ENCODE measurements at regions of chr3 and their contacts with region 1.

Region 1: GRCh38 chr3:65732051-65732935 is 306.4 kb downstream of the MAGI1 start:
- DNase-seq: peak in 5 of 9 donors; percentile 5 to 31 (median 16)
- ATAC-seq: peak; percentile 68
- H3K4me3 ChIP-seq: no peak overlapping the region
- H3K4me3 Mint-ChIP-seq: no peak overlapping the region
- H3K27ac ChIP-seq: no peak overlapping the region
- H3K27ac Mint-ChIP-seq: no peak overlapping the region
- H3K4me1 ChIP-seq: no peaks in the 10 kb centered on the region
- H3K4me1 Mint-ChIP-seq: peaks cover 0 to 4% (median 1%) of the 10 kb centered on the region in 7 donors
- H3K27me3 ChIP-seq: no peaks in the 10 kb centered on the region
- H3K27me3 Mint-ChIP-seq: peaks cover 0 to 14% (median 8%) of the 10 kb centered on the region in 5 donors

Region 2: GRCh38 chr3:65342084-65342683 is 390.1 kb before region 1 on chr3:
- CTCF ChIA-PET with region 1: no interaction called
- POLR2A ChIA-PET with region 1: no interaction called
- intact Hi-C with region 1: loop called in 1 of 2 experiments (anchors 10 kb)
- DNase-seq: peak in 1 of 9 donors; percentile 28
- ATAC-seq: no peak
- H3K4me3 ChIP-seq: no peak overlapping the region
- H3K4me3 Mint-ChIP-seq: no peak overlapping the region
- H3K27ac ChIP-seq: no peak overlapping the region
- H3K27ac Mint-ChIP-seq: no peak overlapping the region
- H3K4me1 ChIP-seq: no peaks in the 10 kb centered on the region
- H3K4me1 Mint-ChIP-seq: no peaks in the 10 kb centered on the region
- H3K27me3 ChIP-seq: no peaks in the 10 kb centered on the region
- H3K27me3 Mint-ChIP-seq: peaks cover 0 to 10% (median 3%) of the 10 kb centered on the region in 5 donors

Region 3: GRCh38 chr3:65493371-65493882 is 238.9 kb before region 1 on chr3:
- CTCF ChIA-PET with region 1: no interaction called
- POLR2A ChIA-PET with region 1: no interaction called
- intact Hi-C with region 1: no loop called
- DNase-seq: no peak
- ATAC-seq: no peak
- H3K4me3 ChIP-seq: no peak overlapping the region
- H3K4me3 Mint-ChIP-seq: no peak overlapping the region
- H3K27ac ChIP-seq: no peak overlapping the region
- H3K27ac Mint-ChIP-seq: no peak overlapping the region
- H3K4me1 ChIP-seq: no peaks in the 10 kb centered on the region
- H3K4me1 Mint-ChIP-seq: no peaks in the 10 kb centered on the region
- H3K27me3 ChIP-seq: no peaks in the 10 kb centered on the region
- H3K27me3 Mint-ChIP-seq: no peaks in the 10 kb centered on the region

Region 4: DNA sequence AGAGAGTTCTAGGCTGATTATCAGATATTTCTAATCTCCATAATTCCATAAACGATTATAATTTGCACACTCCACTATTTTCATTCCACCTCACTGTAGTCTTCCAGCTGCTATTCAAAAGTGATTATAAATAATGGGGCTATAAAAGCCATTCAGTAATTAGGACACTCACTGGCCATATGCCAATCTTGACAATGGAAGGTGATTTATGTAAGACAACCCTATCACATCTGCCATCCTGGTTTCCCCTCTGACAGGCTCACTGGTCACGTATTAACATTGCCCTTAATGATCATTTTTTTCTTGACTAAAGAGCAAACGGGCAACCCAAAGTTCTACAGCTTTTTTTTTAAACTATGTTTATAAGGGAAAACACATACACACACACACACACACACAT is 96.0 kb before region 1 on chr3:
- CTCF ChIA-PET with region 1: no interaction called
- POLR2A ChIA-PET with region 1: no interaction called
- intact Hi-C with region 1: no loop called
- DNase-seq: no peak
- ATAC-seq: no peak
- H3K4me3 ChIP-seq: no peak overlapping the region
- H3K4me3 Mint-ChIP-seq: no peak overlapping the region
- H3K27ac ChIP-seq: no peak overlapping the region
- H3K27ac Mint-ChIP-seq: no peak overlapping the region
- H3K4me1 ChIP-seq: no peaks in the 10 kb centered on the region
- H3K4me1 Mint-ChIP-seq: no peaks in the 10 kb centered on the region
- H3K27me3 ChIP-seq: no peaks in the 10 kb centered on the region
- H3K27me3 Mint-ChIP-seq: peaks cover 0 to 5% (median 0%) of the 10 kb centered on the region in 5 donors